ENCODE measurements at regions of chr14 and their contacts with region 1.

Region 1: DNA sequence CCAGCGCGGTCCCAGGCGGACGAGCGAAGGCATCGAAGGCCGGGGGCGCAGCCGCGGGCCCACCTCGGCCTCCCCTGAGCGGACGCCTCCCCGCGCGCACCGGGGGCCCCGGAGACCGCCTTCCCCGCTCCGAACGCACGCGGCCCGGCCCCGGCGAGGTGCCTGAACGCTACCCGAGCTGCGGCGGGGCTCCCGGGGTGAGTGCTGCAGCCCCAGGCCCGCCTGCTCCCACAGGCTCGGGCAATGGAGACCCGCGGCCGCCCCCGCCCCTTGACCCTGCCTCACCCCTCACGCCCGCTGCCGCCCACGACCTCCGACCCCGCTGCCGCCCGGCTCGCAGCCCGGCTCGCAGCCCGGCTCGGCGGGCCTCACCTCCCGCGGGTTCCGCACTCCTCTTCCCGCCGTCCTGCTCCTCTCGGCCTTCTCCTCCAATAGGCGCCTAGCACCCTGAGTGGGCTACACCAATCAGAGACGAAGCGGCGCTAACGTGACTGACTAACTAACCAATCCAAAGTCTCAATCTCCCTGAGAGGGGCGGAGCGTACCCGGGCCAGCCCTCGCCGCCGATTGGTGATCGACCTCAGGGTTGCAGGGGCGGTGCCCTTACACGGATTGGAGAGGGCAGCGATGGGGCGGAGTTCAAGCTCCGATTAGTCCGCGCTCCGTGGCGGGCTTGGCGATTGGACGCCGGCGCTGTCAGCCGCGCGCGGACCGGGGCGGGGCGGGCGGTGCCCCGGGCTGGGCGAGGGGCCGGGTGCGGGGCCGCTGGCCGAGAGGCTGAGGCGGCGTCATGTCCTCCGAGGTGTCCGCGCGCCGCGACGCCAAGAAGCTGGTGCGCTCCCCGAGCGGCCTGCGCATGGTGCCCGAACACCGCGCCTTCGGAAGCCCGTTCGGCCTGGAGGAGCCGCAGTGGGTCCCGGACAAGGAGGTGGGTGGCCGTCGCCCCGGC is at the starts of genes XRCC3 and ZFYVE21:
- DNase-seq: peak; percentile 100
- H3K4me3 ChIP-seq: peak within 1 kb of the TSS; percentile 12 to 60
- H3K4me3 Mint-ChIP-seq: peak within 1 kb of the TSS; percentile 89 to 95 (median 93)
- H3K27ac ChIP-seq: peak within 1 kb of the TSS; percentile 49
- H3K27ac Mint-ChIP-seq: peak within 1 kb of the TSS; percentile 86 to 98 (median 93)
- H3K4me1 ChIP-seq: peaks cover 21% of the 10 kb centered on the region
- H3K4me1 Mint-ChIP-seq: peaks cover 17 to 72% (median 40%) of the 10 kb centered on the region in 4 donors
- H3K27me3 ChIP-seq: no peaks in the 10 kb centered on the region
- H3K27me3 Mint-ChIP-seq: no peaks in the 10 kb centered on the region
- total RNA-seq, gene XRCC3: 10.3 to 12.6 TPM
- total RNA-seq, gene ZFYVE21: 17.4 to 18.8 TPM

Region 2: GRCh38 chr14:103628684-103629502 is 86.4 kb before region 1 on chr14 and contains the start of gene KLC1:
- CTCF ChIA-PET with region 1: no interaction called
- POLR2A ChIA-PET with region 1: no interaction called
- intact Hi-C with region 1: loop called (anchors 1 kb)
- DNase-seq: peak; percentile 75 to 86 (median 80)
- H3K4me3 ChIP-seq: peak within 1 kb of the TSS; percentile 52 to 85
- H3K4me3 Mint-ChIP-seq: peak within 1 kb of the TSS; percentile 85 to 90 (median 87)
- H3K27ac ChIP-seq: peak within 1 kb of the TSS; percentile 89
- H3K27ac Mint-ChIP-seq: peak within 1 kb of the TSS; percentile 81 to 95 (median 92)
- H3K4me1 ChIP-seq: peaks cover 62% of the 10 kb centered on the region
- H3K4me1 Mint-ChIP-seq: peaks cover 22 to 60% (median 37%) of the 10 kb centered on the region in 4 donors
- H3K27me3 ChIP-seq: no peaks in the 10 kb centered on the region
- H3K27me3 Mint-ChIP-seq: no peaks in the 10 kb centered on the region
- total RNA-seq, gene KLC1: 242 to 278 TPM

Measured in CD4-positive, alpha-beta memory T cell (primary cell).